A673 (cell line): ENCODE measurements at regions of chr3 and their contacts with region 1.

Region 1: GRCh38 chr3:134291319-134292254 is 40.9 kb upstream of the RYK start:
- DNase-seq: peak; percentile 47
- H3K4me3 ChIP-seq: no peak overlapping the region
- H3K27ac ChIP-seq: no peak overlapping the region
- H3K4me1 ChIP-seq: peaks cover 10% of the 10 kb centered on the region
- H3K27me3 ChIP-seq: no peaks in the 10 kb centered on the region
- CTCF ChIP-seq: no peak

Region 2: DNA sequence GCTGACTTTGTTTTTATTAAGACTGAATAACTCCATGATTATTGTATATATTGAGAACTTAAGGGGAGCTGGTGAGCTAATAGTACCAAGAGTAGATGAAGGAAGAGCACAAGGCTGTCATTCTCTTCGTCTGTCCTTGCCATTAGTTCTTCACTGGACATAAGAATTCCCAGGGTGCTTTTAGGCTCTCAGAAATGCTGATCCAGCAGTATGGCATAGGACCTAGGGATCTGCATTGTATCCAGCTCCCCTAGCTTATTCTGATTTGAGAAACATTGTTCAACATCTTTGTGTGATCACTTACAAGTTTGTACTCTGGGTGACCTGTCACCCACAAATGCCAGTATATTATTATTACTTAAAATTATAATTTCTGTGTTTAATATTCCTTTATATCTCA is 241.9 kb after region 1 on chr3:
- CTCF ChIA-PET with region 1: interaction called, 10 read pairs
- POLR2A ChIA-PET with region 1: no interaction called
- intact Hi-C with region 1: no loop called
- DNase-seq: no peak
- H3K4me3 ChIP-seq: no peak overlapping the region
- H3K27ac ChIP-seq: no peak overlapping the region
- H3K4me1 ChIP-seq: no peaks in the 10 kb centered on the region
- H3K27me3 ChIP-seq: no peaks in the 10 kb centered on the region
- CTCF ChIP-seq: no peak

Region 3: DNA sequence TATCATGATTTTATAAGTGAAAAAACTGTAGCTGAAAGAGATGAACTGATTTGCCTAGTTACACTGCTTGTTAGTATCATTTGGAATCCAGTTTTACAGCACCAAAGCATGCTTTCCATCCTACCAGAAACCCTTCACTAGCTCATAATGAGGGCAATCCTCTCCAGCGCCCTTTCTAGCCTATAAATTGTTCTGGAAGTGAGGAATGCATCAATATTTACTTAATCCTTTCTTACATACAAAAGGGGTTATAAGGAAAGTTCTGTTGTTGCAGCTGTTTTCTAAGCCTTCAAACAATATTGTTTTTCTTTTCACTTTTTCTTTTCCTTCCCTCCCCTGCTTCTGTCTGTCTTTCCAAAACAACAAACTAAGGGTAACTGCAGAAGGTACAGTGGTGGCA is 1947.5 kb after region 1 on chr3:
- CTCF ChIA-PET with region 1: no interaction called
- POLR2A ChIA-PET with region 1: interaction called, 21 read pairs
- intact Hi-C with region 1: no loop called
- DNase-seq: no peak
- H3K4me3 ChIP-seq: no peak overlapping the region
- H3K27ac ChIP-seq: no peak overlapping the region
- H3K4me1 ChIP-seq: no peaks in the 10 kb centered on the region
- H3K27me3 ChIP-seq: no peaks in the 10 kb centered on the region
- CTCF ChIP-seq: no peak